MCF 10A (cell line): ENCODE measurements at regions of chr4 and their contacts with region 1.

Region 1: GRCh38 chr4:183074296-183074990 is 24.6 kb upstream of the WWC2 start:
- DNase-seq: no peak
- H3K4me3 Mint-ChIP-seq: no peak overlapping the region
- H3K27ac Mint-ChIP-seq: no peak overlapping the region
- H3K4me1 Mint-ChIP-seq: no peaks in the 10 kb centered on the region
- H3K27me3 Mint-ChIP-seq: no peaks in the 10 kb centered on the region
- CTCF ChIP-seq: no peak

Region 2: GRCh38 chr4:183059797-183060196 is 14.6 kb before region 1 on chr4:
- CTCF ChIA-PET with region 1: interaction called, 26 read pairs
- POLR2A ChIA-PET with region 1: no interaction called
- intact Hi-C with region 1: no loop called
- DNase-seq: no peak
- H3K4me3 Mint-ChIP-seq: no peak overlapping the region
- H3K27ac Mint-ChIP-seq: no peak overlapping the region
- H3K4me1 Mint-ChIP-seq: no peaks in the 10 kb centered on the region
- H3K27me3 Mint-ChIP-seq: no peaks in the 10 kb centered on the region
- CTCF ChIP-seq: no peak

Region 3: DNA sequence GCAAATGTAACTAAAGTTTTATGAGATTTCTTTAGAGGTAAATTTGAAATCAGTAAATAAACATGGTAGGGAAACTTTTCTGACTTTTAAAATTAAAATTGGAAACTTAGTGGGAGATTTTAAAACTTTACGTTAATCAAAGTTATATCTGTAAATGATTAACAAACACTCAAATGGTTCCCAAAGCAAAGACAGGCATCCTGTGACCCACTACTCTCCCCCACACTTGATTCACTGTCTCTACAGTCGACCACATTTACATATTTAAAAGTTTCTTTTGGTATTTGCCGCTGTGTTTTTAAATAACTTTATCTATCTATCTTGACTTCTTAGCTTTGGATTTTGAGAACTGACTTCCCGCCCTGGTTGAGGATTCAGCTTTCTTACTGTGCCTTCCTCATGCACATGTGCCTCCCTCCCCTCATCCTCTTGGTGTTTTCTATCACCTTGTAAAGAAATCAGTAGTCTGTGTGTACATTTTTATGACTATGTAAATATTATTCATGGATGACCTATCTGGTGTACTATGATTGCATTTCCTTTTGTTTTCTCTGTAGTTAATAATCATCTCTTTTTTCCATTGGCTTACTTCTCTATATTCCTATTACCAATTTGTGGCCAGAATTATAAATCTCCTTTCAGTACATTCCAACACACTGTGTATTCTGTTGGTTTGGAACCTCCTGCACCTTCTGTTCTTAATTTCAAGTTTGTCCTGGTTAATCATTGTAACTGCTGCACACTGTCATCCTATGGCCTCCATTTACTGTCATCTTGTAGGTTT is 97.2 kb after region 1 on chr4:
- CTCF ChIA-PET with region 1: no interaction called
- POLR2A ChIA-PET with region 1: no interaction called
- intact Hi-C with region 1: no loop called
- DNase-seq: no peak
- H3K4me3 Mint-ChIP-seq: no peak overlapping the region
- H3K27ac Mint-ChIP-seq: no peak overlapping the region
- H3K4me1 Mint-ChIP-seq: peaks cover 28% of the 10 kb centered on the region
- H3K27me3 Mint-ChIP-seq: no peaks in the 10 kb centered on the region
- CTCF ChIP-seq: no peak

Region 4: GRCh38 chr4:183229397-183229796 is 155.0 kb after region 1 on chr4:
- CTCF ChIA-PET with region 1: interaction called, 10 read pairs
- POLR2A ChIA-PET with region 1: no interaction called
- intact Hi-C with region 1: no loop called
- DNase-seq: peak; percentile 5
- H3K4me3 Mint-ChIP-seq: no peak overlapping the region
- H3K27ac Mint-ChIP-seq: no peak overlapping the region
- H3K4me1 Mint-ChIP-seq: no peaks in the 10 kb centered on the region
- H3K27me3 Mint-ChIP-seq: no peaks in the 10 kb centered on the region
- CTCF ChIP-seq: no peak

Region 5: DNA sequence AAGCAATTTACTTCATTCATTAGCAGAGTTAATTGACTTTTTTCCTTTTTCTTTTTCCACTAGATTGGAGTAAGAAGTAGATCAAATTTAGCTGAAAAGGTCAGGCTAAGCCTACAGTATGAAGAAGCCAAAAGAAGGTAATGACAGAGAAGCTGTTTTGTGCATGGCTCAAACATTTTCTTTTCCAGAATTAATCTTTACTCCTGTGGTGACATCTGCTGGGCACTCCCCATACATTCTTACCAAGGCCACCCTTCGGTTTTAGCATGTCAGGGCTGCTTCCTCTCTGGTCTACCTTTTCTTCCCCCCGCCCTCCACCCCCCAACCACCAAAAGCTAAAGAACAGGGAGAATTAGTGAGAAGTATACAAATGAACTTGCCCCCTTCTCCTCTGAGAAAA is 175.4 kb after region 1 on chr4:
- CTCF ChIA-PET with region 1: interaction called, 226 read pairs
- POLR2A ChIA-PET with region 1: interaction called, 5 read pairs
- intact Hi-C with region 1: loop called (anchors 1 kb)
- DNase-seq: peak; percentile 54
- H3K4me3 Mint-ChIP-seq: no peak overlapping the region
- H3K27ac Mint-ChIP-seq: no peak overlapping the region
- H3K4me1 Mint-ChIP-seq: no peaks in the 10 kb centered on the region
- H3K27me3 Mint-ChIP-seq: no peaks in the 10 kb centered on the region
- CTCF ChIP-seq: peak; percentile 43

Region 6: GRCh38 chr4:183261953-183262775 is 187.7 kb after region 1 on chr4:
- CTCF ChIA-PET with region 1: interaction called, 226 read pairs
- POLR2A ChIA-PET with region 1: interaction called, 3 read pairs
- intact Hi-C with region 1: loop called (anchors 1 kb)
- DNase-seq: peak; percentile 84
- H3K4me3 Mint-ChIP-seq: no peak overlapping the region
- H3K27ac Mint-ChIP-seq: peak overlapping the region; percentile 52
- H3K4me1 Mint-ChIP-seq: peaks cover 5% of the 10 kb centered on the region
- H3K27me3 Mint-ChIP-seq: no peaks in the 10 kb centered on the region
- CTCF ChIP-seq: peak; percentile 68

Region 7: DNA sequence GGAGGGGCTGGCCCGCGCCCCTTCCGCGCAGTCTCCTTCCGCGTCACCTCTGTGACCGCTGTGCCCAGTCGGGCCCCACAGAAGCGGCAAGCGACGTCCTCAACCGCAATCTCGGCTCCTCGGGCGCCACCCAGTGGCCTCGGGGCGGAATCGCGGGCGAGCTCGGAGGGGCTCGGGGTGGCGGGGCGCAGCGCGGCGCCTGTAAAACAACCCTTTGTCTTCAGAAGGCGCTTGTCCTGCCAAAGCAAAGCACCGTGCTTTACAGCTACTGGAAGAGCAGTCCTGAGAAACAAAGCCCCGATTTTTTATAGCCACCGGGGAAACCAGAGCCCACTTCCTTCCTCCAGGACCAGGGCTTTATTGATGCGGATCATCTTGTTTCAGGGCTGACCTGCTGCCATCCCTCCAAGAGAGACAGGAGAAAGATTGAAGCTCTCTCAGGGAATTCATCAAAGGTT is 332.7 kb after region 1 on chr4:
- CTCF ChIA-PET with region 1: no interaction called
- POLR2A ChIA-PET with region 1: no interaction called
- intact Hi-C with region 1: loop called (anchors 1 kb)
- DNase-seq: peak; percentile 75
- H3K4me3 Mint-ChIP-seq: peak overlapping the region; percentile 38
- H3K27ac Mint-ChIP-seq: no peak overlapping the region
- H3K4me1 Mint-ChIP-seq: peaks cover 13% of the 10 kb centered on the region
- H3K27me3 Mint-ChIP-seq: no peaks in the 10 kb centered on the region
- CTCF ChIP-seq: peak; percentile 98